ENCODE measurements at regions of chr15 and their contacts with region 1.

Region 1: DNA sequence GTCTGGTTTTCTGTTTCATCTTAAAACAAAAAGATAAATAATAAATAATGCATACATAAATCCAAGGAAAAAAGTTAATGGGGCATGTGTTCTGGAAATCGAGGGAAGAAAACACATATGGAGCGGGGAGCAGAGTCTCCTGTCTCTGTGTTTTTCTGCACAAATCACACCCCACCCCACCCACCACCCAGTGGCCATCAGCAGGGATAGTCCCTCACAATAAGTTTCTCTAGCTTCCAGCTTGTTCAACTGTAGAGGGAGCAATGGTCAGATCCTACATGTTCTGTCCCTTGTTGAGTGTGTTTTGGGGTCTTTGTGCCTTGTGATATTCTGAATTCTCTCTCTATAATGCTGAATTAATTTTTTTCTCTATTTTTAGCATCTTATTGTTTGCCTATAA is 26.8 kb upstream of the CHRNA7 start:
- DNase-seq: no peak
- H3K4me3 ChIP-seq: no peak overlapping the region
- H3K27ac ChIP-seq: no peak overlapping the region
- H3K4me1 ChIP-seq: no peaks in the 10 kb centered on the region
- H3K27me3 ChIP-seq: no peaks in the 10 kb centered on the region
- CTCF ChIP-seq: peak in 2 of 3 experiments; percentile 13 to 41; a peak in 3 of 4 replicates
- EP300 ChIP-seq: no peak
- POLR2A ChIP-seq: no peak
- RAD21 ChIP-seq: no peak

Region 2: DNA sequence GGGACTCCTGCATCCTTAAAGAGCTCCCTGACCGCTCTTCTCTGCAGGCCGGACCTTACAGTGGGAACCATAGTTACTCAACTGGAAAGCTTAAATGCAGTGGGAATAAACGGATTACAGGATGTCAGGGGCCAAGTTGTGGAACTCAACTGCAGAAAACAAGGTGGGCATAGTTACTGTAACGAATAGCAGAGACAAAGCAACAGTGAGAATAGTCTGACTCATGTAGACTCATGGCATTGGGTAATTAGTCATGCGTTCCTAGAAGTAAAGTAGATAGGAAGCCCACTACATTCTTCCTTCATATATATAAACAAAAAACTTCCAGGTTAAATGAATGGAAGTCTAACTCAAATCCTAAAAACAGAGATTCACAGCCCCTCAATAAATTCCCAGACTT is 68.7 kb before region 1 on chr15:
- CTCF ChIA-PET with region 1: no interaction called
- POLR2A ChIA-PET with region 1: no interaction called
- DNase-seq: no peak
- H3K4me3 ChIP-seq: no peak overlapping the region
- H3K27ac ChIP-seq: no peak overlapping the region
- H3K4me1 ChIP-seq: no peaks in the 10 kb centered on the region
- H3K27me3 ChIP-seq: no peaks in the 10 kb centered on the region
- CTCF ChIP-seq: no peak
- EP300 ChIP-seq: no peak
- POLR2A ChIP-seq: no peak
- RAD21 ChIP-seq: no peak

Region 3: DNA sequence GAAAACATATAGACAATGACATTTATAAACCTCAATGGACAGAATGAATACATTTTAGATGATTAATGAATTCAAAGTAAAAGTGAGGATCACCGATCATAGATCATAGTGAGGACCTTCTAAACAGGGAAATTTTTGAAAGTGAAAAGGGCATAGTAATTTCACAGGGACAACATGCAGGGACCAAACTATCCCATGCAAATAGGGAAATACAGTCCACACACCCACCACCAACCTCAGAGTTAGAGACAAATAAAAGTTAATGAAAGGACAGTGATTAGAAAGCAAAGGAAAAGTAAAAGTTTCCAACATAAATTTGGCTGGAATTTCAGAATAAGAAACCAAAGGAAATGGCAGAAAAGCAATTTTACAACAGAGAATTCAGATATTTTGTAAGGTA is 11.4 kb after region 1 on chr15:
- CTCF ChIA-PET with region 1: no interaction called
- POLR2A ChIA-PET with region 1: no interaction called
- DNase-seq: no peak
- H3K4me3 ChIP-seq: no peak overlapping the region
- H3K27ac ChIP-seq: no peak overlapping the region
- H3K4me1 ChIP-seq: no peaks in the 10 kb centered on the region
- H3K27me3 ChIP-seq: no peaks in the 10 kb centered on the region
- CTCF ChIP-seq: no peak
- EP300 ChIP-seq: no peak
- POLR2A ChIP-seq: no peak
- RAD21 ChIP-seq: no peak

Region 4: GRCh38 chr15:32029862-32030781 is 26.6 kb after region 1 on chr15 and contains the start of gene CHRNA7:
- CTCF ChIA-PET with region 1: interaction called, 11 read pairs
- POLR2A ChIA-PET with region 1: no interaction called
- DNase-seq: peak in 1 of 2 experiments; percentile 78
- H3K4me3 ChIP-seq: peak within 1 kb of the TSS; percentile 76 to 87 (median 83)
- H3K27ac ChIP-seq: no peak within 1 kb of the TSS
- H3K4me1 ChIP-seq: peaks cover 0 to 3% (median 0%) of the 10 kb centered on the region in 4 experiments; a peak in 2 of 7 replicates
- H3K27me3 ChIP-seq: peaks cover 0 to 15% (median 8%) of the 10 kb centered on the region in 4 experiments; a peak in 3 of 7 replicates
- CTCF ChIP-seq: peak; percentile 22 to 54 (median 25); a peak in 2 of 4 replicates
- EP300 ChIP-seq: no peak
- POLR2A ChIP-seq: peak; percentile 91 to 95
- RAD21 ChIP-seq: no peak
- total RNA-seq, gene CHRNA7: 7.5 and 9.1 TPM in 2 replicates

Measured in H1 (cell line).